Dendritic cell treated with granulocyte-macrophage colony-stimulating factor and Interleukin-4, amounts not matched to agents 40 ng/mL and 50 ng/mL, for 4 days (primary cell): ENCODE measurements at regions of chr16 and their contacts with region 1.

Region 1: GRCh38 chr16:84791088-84791487 is 28.7 kb upstream of the CRISPLD2 start:
- H3K4me3 Mint-ChIP-seq: no peak overlapping the region
- H3K27ac Mint-ChIP-seq: no peak overlapping the region
- H3K4me1 Mint-ChIP-seq: peaks cover 24% of the 10 kb centered on the region
- H3K27me3 Mint-ChIP-seq: no peaks in the 10 kb centered on the region

Region 2: DNA sequence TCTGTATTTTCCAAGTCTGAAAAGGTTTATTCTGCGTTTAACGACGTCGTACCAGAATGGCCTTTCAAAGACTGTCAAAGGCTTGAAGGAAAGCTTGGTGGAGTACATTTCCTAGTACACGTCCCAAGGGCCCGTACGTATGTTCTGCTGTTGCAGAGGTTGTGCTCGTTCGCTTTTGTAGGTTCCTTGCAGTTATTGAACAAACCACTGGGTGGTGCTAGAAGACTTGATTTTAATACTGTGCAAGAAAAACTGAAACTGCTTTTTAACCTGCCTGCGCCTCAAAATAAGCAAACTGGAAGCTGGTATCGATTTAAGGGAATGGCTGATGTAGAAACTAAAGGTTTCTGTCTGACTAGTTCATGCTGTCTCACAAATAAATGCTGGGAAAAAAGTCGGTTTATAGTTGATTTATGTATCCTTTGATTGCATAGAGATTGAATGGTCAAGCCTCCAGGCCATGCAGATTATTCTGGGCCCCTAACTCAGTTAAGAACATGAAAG is 36.7 kb before region 1 on chr16:
- intact Hi-C with region 1: no loop called
- H3K4me3 Mint-ChIP-seq: peak overlapping the region; percentile 53
- H3K27ac Mint-ChIP-seq: peak overlapping the region; percentile 62
- H3K4me1 Mint-ChIP-seq: peaks cover 72% of the 10 kb centered on the region
- H3K27me3 Mint-ChIP-seq: no peaks in the 10 kb centered on the region

Region 3: DNA sequence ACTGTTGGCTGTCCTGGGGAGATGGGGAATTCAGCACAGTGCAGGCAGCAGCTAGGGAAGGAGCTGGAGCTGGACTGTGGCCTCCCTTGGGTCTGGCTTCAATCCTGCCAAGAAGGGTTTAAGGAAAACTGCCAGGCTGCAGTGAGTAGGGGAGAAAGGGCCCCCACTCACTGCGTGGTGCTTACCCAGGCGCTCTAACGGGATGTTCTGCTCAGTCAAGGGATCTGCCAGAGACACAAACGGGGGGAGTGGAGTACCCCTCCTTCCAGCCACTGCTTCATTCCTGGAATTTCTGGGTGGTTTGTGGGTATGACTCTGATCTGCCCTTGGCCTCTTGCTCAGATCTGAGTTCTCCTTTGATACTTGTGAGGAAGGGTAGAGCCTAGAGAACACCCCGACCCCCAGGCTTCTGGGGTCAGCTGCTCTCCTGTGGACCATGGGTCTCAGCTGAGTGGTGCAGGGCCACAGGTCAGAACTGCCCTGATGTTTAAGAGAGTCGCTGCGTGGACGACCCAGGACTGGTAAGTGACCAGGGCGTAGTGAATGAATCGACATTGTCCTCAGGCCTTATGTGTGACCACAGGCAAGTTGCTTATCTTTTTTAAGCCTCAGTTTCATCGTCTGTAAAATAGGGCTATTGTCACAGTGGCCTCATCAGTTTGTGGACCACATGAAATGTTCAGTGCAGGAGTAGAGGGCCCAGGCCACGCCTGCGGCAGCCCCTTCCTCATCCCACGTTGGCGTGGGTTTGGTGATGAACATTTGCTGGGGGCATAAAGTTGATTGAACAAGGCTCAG is 38.3 kb after region 1 on chr16:
- intact Hi-C with region 1: loop called (anchors 5 kb)
- H3K4me3 Mint-ChIP-seq: no peak overlapping the region
- H3K27ac Mint-ChIP-seq: no peak overlapping the region
- H3K4me1 Mint-ChIP-seq: peaks cover 39% of the 10 kb centered on the region
- H3K27me3 Mint-ChIP-seq: peaks cover 5% of the 10 kb centered on the region